Left ventricle myocardium superior (tissue), 1 donor: ENCODE measurements at regions of chr15 and their contacts with region 1.

Region 1: DNA sequence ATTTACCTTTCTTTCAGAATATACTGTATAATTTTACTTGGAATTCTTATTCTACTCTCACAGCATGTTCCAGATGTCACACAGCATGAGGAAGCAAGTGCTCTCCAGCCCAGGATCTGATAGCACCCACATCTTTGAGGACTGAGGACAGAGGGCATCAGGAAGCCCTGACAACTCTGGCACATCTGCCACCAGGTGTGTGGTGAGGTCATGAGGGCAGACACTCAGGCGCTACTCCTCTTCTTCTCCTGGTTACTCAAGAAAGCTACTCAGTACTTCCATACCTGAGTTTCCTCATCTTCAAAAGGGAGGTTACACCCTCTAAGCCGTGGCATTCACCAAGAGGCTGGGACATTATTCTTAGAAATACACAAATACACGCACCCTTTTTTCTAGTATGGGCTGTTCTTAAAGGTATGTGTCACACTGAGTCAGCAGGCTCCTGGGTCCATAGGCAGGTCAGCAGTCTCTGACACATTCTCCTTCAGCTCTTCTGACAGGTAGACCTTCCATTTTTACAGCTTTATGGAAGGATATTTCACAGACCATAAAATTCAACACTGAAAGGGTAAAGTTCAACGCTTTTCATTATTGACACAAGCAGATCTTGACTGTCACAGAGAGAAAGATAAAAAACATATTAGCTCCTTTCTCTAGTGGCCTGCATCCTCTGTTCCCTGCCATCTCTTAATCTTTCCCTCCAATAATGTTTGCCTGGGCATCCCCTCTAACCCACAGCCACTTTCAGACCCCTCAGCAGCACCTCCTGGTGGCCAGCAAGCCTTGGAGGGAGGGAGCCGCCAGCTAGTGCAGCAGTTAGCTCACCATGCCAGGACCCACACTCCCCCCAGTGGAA is 103.2 kb upstream of the TJP1 start:
- DNase-seq: peak; percentile 82
- ATAC-seq: peak; percentile 97

Region 2: GRCh38 chr15:29747837-29748417 is 177.5 kb before region 1 on chr15:
- intact Hi-C with region 1: loop called (anchors 5 kb)
- DNase-seq: no peak
- ATAC-seq: no peak

Region 3: GRCh38 chr15:29805043-29805707 is 120.3 kb before region 1 on chr15:
- intact Hi-C with region 1: loop called (anchors 10 kb)
- DNase-seq: no peak
- ATAC-seq: peak; percentile 88

Region 4: GRCh38 chr15:29942143-29942542 is 16.7 kb after region 1 on chr15:
- intact Hi-C with region 1: no loop called
- DNase-seq: no peak
- ATAC-seq: peak; percentile 36